HEK293T (cell line): ENCODE measurements at regions of chr1 and their contacts with region 1.

Region 1: GRCh38 chr1:183247066-183247465 is 61.0 kb downstream of the LAMC2 start:
- DNase-seq: no peak

Region 2: GRCh38 chr1:183051546-183051945 is 195.5 kb before region 1 on chr1:
- CTCF ChIA-PET with region 1: interaction called, 11 read pairs
- POLR2A ChIA-PET with region 1: no interaction called
- DNase-seq: no peak

Region 3: DNA sequence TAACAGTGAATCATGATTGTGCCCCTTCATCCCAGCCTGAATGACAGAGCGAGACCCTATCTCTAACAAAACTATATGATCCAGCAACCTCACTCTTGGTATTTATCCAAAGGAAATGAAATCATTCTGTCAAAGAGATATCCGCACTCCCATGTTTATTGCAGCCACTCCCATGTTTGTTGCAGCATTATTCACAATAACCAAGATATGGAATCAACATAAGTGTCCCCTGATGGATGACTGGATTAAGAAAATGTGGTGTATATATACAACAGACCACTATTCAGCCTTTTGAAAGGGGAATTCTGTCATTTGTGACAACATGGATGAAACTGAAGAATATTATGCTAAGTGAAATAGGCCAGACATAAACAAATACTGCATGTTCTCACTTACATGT is 1865.3 kb after region 1 on chr1:
- CTCF ChIA-PET with region 1: no interaction called
- POLR2A ChIA-PET with region 1: no interaction called
- DNase-seq: no peak